ENCODE measurements at regions of chr1 and their contacts with region 1.

Region 1: GRCh38 chr1:56790036-56790435 is 29.2 kb downstream of the FYB2 start:
- DNase-seq: no peak

Region 2: DNA sequence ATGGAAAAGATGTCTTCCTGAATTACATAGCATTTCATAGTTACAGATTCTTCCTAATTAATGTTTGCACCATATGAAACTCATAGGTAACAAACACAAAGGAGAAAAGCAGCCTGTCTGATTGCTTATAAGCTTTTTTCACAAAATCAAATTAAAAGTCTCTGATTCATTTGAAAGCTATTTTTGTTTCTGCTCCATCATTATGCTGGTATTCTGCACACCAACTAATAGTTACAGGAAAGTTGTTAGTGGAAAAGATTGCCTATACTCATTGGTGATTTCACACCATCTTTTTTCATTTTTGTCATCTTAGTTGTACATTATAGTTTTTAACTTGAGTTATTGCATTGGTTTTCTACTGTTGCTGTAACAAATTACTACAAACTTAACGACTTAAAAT is 74.9 kb before region 1 on chr1:
- intact Hi-C with region 1: loop called (anchors 5 kb)
- DNase-seq: no peak

Measured in cardiac septum (tissue), 1 donor.